ENCODE measurements at regions of chr19 and their contacts with region 1.

Region 1: GRCh38 chr19:48965040-48965805 is at the start of gene FTL:
- DNase-seq: peak; percentile 98
- H3K4me3 Mint-ChIP-seq: peak within 1 kb of the TSS; percentile 100
- H3K27ac Mint-ChIP-seq: peak within 1 kb of the TSS; percentile 99
- H3K4me1 Mint-ChIP-seq: peaks cover 58% of the 10 kb centered on the region
- H3K27me3 Mint-ChIP-seq: no peaks in the 10 kb centered on the region
- total RNA-seq, gene FTL: 696 and 697 TPM in 2 replicates

Region 2: DNA sequence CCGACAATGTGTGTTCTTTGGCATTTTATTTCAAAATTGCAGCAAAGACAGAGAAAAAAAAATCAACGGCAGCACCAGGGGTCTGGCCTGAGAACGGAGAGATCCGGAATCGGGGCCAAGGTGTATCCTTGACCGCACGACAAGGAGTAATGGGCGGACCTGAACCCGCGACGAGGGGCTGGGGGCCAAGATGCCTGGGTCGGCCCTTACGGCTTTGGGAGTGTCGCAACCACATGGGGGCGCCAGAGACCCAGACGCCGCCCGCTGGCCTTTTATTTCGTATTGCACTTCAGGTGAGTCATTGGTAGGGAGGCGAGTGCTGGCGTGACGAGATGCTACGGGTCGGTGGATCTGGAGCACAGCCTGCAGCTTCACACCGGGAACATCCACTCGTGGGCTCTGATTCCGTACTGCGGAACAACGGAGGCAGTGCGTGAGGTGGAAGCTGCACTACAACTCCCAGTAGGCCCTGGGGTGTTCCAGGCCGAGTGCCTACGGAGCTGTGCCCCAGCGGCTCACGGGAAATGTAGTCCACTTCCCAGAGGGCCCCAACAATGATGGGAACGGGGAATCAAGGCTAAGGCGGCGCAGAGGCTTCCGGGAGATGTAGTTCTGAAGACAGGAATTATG is 170.1 kb before region 1 on chr19:
- intact Hi-C with region 1: loop called (anchors 2 kb)
- DNase-seq: peak; percentile 95
- H3K4me3 Mint-ChIP-seq: peak overlapping the region; percentile 95
- H3K27ac Mint-ChIP-seq: peak overlapping the region; percentile 90
- H3K4me1 Mint-ChIP-seq: peaks cover 12% of the 10 kb centered on the region
- H3K27me3 Mint-ChIP-seq: no peaks in the 10 kb centered on the region

Region 3: DNA sequence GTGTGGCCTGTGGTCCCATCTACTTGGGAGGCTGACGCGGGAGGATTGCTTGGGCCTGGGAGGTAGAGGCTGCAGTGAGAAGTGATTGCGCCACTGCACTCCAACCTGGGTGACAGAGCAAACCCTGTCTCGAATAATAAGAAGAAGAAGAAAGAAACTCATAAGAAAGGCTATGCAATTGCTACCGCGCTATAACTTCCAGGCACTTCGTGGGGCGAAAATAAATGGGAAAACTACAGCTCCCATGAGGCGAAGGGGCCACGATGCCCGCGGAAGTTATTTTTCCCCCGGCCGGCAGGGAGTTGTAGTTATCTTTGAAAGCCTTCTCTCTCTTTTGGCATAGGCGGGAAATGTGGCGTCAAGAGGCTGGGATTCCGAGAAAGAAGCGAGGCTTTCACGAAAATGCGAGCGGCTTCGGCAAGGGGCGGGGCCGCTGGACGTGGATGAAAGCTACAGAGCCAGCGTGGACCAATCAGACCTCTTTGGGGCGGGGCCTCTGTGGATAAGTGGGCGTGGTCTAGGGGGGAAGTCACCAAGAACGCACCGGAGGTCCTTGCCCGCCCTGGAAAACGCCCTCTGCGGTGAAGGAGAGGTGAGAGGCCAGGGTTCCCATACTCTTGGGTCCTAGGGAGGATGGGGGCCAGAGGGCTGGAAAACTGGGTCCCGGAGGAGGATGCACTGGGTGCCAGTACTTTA is 65.3 kb before region 1 on chr19 and contains the start of gene NUCB1:
- intact Hi-C with region 1: loop called (anchors 2 kb)
- DNase-seq: peak; percentile 100
- H3K4me3 Mint-ChIP-seq: peak within 1 kb of the TSS; percentile 98
- H3K27ac Mint-ChIP-seq: peak within 1 kb of the TSS; percentile 95
- H3K4me1 Mint-ChIP-seq: peaks cover 26% of the 10 kb centered on the region
- H3K27me3 Mint-ChIP-seq: peaks cover 4% of the 10 kb centered on the region
- total RNA-seq, gene NUCB1: 116 and 117 TPM in 2 replicates

Region 4: GRCh38 chr19:48954595-48955310 is 10.5 kb before region 1 on chr19 and contains the start of gene BAX:
- intact Hi-C with region 1: loop called (anchors 1 kb)
- DNase-seq: peak; percentile 98
- H3K4me3 Mint-ChIP-seq: peak within 1 kb of the TSS; percentile 86
- H3K27ac Mint-ChIP-seq: peak within 1 kb of the TSS; percentile 93
- H3K4me1 Mint-ChIP-seq: peaks cover 25% of the 10 kb centered on the region
- H3K27me3 Mint-ChIP-seq: no peaks in the 10 kb centered on the region
- total RNA-seq, gene BAX: 257 and 298 TPM in 2 replicates